Right ventricle myocardium superior (tissue), 1 donor: ENCODE measurements at regions of chr2 and their contacts with region 1.

Region 1: GRCh38 chr2:55014962-55015939 is 35.0 kb downstream of the RTN4 start:
- DNase-seq: no peak
- ATAC-seq: peak; percentile 87

Region 2: DNA sequence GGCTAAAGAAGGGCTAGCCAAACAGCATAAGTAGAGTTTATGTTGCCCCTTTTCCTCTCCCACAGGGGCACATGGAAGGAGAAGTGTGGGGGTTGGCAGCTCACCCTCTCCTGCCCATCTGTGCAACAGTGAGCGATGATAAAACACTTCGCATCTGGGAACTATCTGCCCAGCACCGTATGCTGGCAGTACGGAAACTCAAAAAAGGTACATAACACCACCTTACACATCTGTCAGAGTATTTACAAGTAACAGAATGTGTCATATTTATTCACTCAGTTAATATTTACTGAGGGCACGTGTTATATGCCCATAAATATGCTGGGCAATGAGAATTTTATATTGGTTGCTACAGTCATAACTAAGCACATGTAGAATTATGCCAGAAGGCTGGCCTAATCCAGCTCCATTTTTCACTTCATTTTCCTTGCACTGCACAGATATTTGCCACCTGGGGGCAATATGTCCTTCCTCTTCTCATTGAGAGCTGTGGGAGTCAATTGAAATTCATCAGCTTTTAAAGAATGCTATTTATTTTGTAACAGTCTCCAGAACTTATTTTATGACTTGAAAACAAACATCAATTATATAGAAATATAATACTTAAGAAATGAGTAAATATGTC is 115.6 kb before region 1 on chr2:
- intact Hi-C with region 1: no loop called
- DNase-seq: no peak
- ATAC-seq: peak; percentile 66

Region 3: GRCh38 chr2:55175254-55176025 is 160.2 kb after region 1 on chr2:
- intact Hi-C with region 1: loop called (anchors 2 kb)
- DNase-seq: no peak
- ATAC-seq: peak; percentile 79